Esophagus muscularis mucosa (tissue), 4 donors: ENCODE measurements at regions of chr17 and their contacts with region 1.

Region 1: GRCh38 chr17:29931231-29931932 is 1.4 kb upstream of the SSH2 start:
- DNase-seq: no peak
- H3K4me3 ChIP-seq: peak overlapping the region; percentile 68 to 97 (median 86)
- H3K27ac ChIP-seq: peak overlapping the region in 1 of 4 donors; percentile 89
- H3K4me1 ChIP-seq: peaks cover 27 to 35% (median 31%) of the 10 kb centered on the region in 4 donors
- H3K27me3 ChIP-seq: no peaks in the 10 kb centered on the region
- CTCF ChIP-seq: peak; percentile 86 to 93 (median 87)
- EP300 ChIP-seq: no peak
- POLR2A ChIP-seq: no peak

Region 2: DNA sequence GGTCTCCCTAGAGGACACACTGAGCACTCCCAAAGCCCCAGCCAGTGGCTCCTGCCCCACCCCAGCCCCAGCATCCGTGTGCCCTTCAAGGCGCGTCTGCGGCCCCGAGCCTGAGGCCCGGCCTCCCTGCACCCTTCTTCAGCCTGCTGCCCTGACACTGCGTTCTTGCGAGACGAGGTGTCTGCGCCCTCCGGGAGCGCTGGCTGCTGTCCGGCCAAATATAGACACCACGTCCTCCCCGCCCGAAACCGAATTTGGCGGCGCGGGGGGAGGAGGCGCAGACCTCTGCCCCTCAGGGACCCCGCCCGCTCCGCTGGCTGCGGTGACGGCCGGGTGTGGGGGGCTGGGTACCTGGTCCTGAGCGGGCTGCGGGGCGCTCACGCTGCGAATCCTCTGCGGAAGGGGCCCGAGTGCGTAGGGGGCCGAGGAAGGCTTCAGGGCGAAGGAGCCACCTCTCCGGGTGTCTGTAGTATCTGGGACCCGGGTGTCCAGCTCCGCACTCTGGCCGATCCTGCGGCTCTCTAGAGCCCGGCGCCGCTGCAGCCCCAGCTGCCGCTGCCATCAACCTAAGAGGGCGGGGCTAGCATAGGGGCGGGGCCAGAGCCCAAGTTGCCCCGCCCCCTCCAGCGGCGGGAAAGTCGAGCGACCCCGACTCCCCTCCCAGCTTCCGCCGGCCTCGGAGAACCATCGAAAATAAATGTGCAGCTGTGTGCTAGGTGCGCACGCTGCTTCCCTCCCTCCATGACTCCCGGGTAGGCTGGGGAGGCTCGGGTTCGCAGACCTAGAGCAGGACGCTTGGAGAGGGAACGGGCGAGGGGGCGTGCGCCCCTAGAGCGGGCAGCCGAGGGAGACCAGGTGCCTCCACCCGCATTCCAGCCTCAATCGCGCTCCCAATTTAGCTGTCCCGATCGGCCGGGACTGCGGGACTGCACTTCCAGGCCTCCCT is 308.8 kb before region 1 on chr17 and contains the start of gene CORO6:
- intact Hi-C with region 1: loop called (anchors 10 kb)
- DNase-seq: no peak
- H3K4me3 ChIP-seq: peak within 1 kb of the TSS; percentile 73 to 85 (median 78)
- H3K27ac ChIP-seq: peak within 1 kb of the TSS; percentile 88 to 92 (median 90)
- H3K4me1 ChIP-seq: peaks cover 58 to 71% (median 68%) of the 10 kb centered on the region in 4 donors
- H3K27me3 ChIP-seq: peaks cover 0 to 6% (median 0%) of the 10 kb centered on the region in 4 donors
- CTCF ChIP-seq: no peak
- EP300 ChIP-seq: no peak
- POLR2A ChIP-seq: peak; percentile 63
- total RNA-seq, gene CORO6: 43.7 to 67.7 (median 46.9) TPM

Region 3: GRCh38 chr17:29807520-29808351 is 123.6 kb before region 1 on chr17:
- intact Hi-C with region 1: loop called (anchors 1 kb)
- DNase-seq: no peak
- H3K4me3 ChIP-seq: no peak overlapping the region
- H3K27ac ChIP-seq: no peak overlapping the region
- H3K4me1 ChIP-seq: no peaks in the 10 kb centered on the region
- H3K27me3 ChIP-seq: no peaks in the 10 kb centered on the region
- CTCF ChIP-seq: peak; percentile 72 to 75 (median 75)
- EP300 ChIP-seq: no peak
- POLR2A ChIP-seq: no peak

Region 4: GRCh38 chr17:29870836-29871465 is 60.4 kb before region 1 on chr17:
- intact Hi-C with region 1: loop called (anchors 5 kb)
- DNase-seq: no peak
- H3K4me3 ChIP-seq: no peak overlapping the region
- H3K27ac ChIP-seq: no peak overlapping the region
- H3K4me1 ChIP-seq: peaks cover 4 to 26% (median 12%) of the 10 kb centered on the region in 4 donors
- H3K27me3 ChIP-seq: no peaks in the 10 kb centered on the region
- CTCF ChIP-seq: no peak
- EP300 ChIP-seq: no peak
- POLR2A ChIP-seq: no peak